ENCODE measurements at regions of chr9 and their contacts with region 1.

Region 1: GRCh38 chr9:100322954-100323536 is 29.7 kb downstream of the TEX10 start:
- DNase-seq: peak; percentile 61
- ATAC-seq: no peak
- H3K4me3 ChIP-seq: no peak overlapping the region
- H3K4me3 Mint-ChIP-seq: no peak overlapping the region
- H3K27ac ChIP-seq: no peak overlapping the region
- H3K27ac Mint-ChIP-seq: no peak overlapping the region
- H3K4me1 ChIP-seq: no peaks in the 10 kb centered on the region
- H3K4me1 Mint-ChIP-seq: peaks cover 4% of the 10 kb centered on the region
- H3K27me3 ChIP-seq: no peaks in the 10 kb centered on the region
- H3K27me3 Mint-ChIP-seq: no peaks in the 10 kb centered on the region
- CTCF ChIP-seq: peak; percentile 78

Region 2: GRCh38 chr9:98974994-98975712 is 1347.9 kb before region 1 on chr9:
- CTCF ChIA-PET with region 1: interaction called, 4 read pairs
- POLR2A ChIA-PET with region 1: no interaction called
- intact Hi-C with region 1: loop called (anchors 5 kb)
- DNase-seq: peak; percentile 82
- ATAC-seq: peak; percentile 99
- H3K4me3 ChIP-seq: peak overlapping the region in 4 of 5 experiments; percentile 3 to 47 (median 24)
- H3K4me3 Mint-ChIP-seq: peak overlapping the region; percentile 52
- H3K27ac ChIP-seq: no peak overlapping the region
- H3K27ac Mint-ChIP-seq: no peak overlapping the region
- H3K4me1 ChIP-seq: peaks cover 4 to 10% of the 10 kb centered on the region in 2 donors
- H3K4me1 Mint-ChIP-seq: peaks cover 6% of the 10 kb centered on the region
- H3K27me3 ChIP-seq: peaks cover 0 to 21% (median 10%) of the 10 kb centered on the region in 4 experiments
- H3K27me3 Mint-ChIP-seq: peaks cover 20% of the 10 kb centered on the region
- CTCF ChIP-seq: peak; percentile 97

Region 3: DNA sequence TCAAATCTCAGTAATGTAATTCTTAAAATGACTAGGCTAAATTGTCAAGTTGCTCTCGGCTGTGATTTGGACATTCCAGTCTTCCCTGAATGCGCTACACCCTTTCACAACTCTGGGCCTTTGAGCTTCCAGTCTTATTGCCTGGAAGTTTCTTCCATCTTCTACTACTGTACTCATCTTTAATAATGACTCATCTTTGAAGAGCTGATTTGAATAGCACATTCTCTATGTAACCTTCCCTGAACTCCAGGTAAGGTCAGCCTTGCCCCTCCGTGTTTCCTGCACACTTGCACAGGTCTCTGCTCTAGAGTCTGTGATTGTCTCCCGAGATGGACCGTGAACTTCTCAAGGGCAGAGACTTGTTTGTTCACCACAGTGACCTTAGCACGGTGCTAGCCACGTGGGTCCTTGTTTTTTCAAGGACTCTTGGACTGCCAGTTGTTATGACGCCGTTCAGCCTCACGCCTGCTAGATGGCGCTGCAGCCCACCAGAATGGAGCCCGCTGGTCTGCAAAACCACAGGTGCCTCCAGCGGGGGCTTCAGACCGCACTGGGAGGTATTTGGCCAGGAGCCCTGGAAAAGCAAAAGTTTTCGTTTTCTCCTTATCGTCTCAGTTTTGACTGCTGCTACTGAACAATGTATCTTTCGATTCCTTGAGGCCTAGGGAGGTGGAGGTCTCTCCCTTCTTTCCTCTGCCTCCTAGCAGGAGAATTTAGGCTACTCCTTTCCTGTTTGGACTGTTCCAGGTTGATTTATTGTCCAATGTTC is 1056.6 kb before region 1 on chr9:
- CTCF ChIA-PET with region 1: interaction called, 4 read pairs
- POLR2A ChIA-PET with region 1: no interaction called
- intact Hi-C with region 1: loop called (anchors 5 kb)
- DNase-seq: peak; percentile 81
- ATAC-seq: peak; percentile 74
- H3K4me3 ChIP-seq: peak overlapping the region in 1 of 5 experiments; percentile 3
- H3K4me3 Mint-ChIP-seq: peak overlapping the region; percentile 71
- H3K27ac ChIP-seq: no peak overlapping the region
- H3K27ac Mint-ChIP-seq: peak overlapping the region; percentile 59
- H3K4me1 ChIP-seq: peaks cover 6 to 9% of the 10 kb centered on the region in 2 donors
- H3K4me1 Mint-ChIP-seq: peaks cover 31% of the 10 kb centered on the region
- H3K27me3 ChIP-seq: no peaks in the 10 kb centered on the region
- H3K27me3 Mint-ChIP-seq: peaks cover 3% of the 10 kb centered on the region
- CTCF ChIP-seq: peak; percentile 95

Region 4: DNA sequence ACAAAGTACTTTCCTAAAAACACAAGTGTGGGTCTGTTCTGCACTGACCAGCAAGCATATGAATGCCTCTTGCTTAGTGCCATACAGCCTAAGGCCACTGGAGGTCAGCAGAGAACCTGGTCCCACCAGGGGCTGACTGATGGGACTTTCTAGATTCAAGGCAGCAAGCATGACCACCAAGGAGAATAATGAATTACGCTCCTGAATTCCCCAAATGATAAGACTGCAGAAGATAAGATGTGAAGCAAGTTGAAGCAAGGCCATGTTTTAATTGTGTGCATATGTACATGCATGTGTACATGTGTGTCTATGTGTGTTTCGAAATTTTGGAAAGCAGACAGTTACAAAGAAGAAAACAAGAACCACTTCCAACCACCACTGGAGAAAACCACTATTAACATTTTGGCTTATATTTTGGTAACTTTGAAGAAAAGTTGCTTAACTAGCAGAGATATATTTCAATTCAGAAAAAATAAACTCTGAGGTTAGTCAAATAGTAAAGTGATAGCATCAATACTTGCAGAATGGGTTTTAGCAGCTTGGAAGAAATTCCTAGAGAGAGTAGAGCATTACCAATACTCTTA is 294.8 kb before region 1 on chr9:
- CTCF ChIA-PET with region 1: interaction called, 44 read pairs
- POLR2A ChIA-PET with region 1: no interaction called
- intact Hi-C with region 1: loop called (anchors 1 kb)
- DNase-seq: peak; percentile 83
- ATAC-seq: peak; percentile 99
- H3K4me3 ChIP-seq: no peak overlapping the region
- H3K4me3 Mint-ChIP-seq: no peak overlapping the region
- H3K27ac ChIP-seq: no peak overlapping the region
- H3K27ac Mint-ChIP-seq: peak overlapping the region; percentile 3
- H3K4me1 ChIP-seq: peaks cover 16% of the 10 kb centered on the region in 2 donors
- H3K4me1 Mint-ChIP-seq: peaks cover 26% of the 10 kb centered on the region
- H3K27me3 ChIP-seq: no peaks in the 10 kb centered on the region
- H3K27me3 Mint-ChIP-seq: no peaks in the 10 kb centered on the region
- CTCF ChIP-seq: peak; percentile 99

Region 5: GRCh38 chr9:100352727-100353505 is 29.9 kb after region 1 on chr9 and contains the start of gene TEX10:
- CTCF ChIA-PET with region 1: interaction called, 13 read pairs
- POLR2A ChIA-PET with region 1: interaction called, 3 read pairs
- intact Hi-C with region 1: no loop called
- DNase-seq: peak; percentile 93
- ATAC-seq: peak; percentile 93
- H3K4me3 ChIP-seq: peak within 1 kb of the TSS; percentile 53 to 94 (median 92)
- H3K4me3 Mint-ChIP-seq: peak within 1 kb of the TSS; percentile 93
- H3K27ac ChIP-seq: peak within 1 kb of the TSS; percentile 58 to 90
- H3K27ac Mint-ChIP-seq: peak within 1 kb of the TSS; percentile 83
- H3K4me1 ChIP-seq: peaks cover 35% of the 10 kb centered on the region in 2 donors
- H3K4me1 Mint-ChIP-seq: peaks cover 69% of the 10 kb centered on the region
- H3K27me3 ChIP-seq: no peaks in the 10 kb centered on the region
- H3K27me3 Mint-ChIP-seq: no peaks in the 10 kb centered on the region
- CTCF ChIP-seq: no peak
- total RNA-seq, gene TEX10: 24.9 and 27.6 TPM in 2 replicates

Region 6: DNA sequence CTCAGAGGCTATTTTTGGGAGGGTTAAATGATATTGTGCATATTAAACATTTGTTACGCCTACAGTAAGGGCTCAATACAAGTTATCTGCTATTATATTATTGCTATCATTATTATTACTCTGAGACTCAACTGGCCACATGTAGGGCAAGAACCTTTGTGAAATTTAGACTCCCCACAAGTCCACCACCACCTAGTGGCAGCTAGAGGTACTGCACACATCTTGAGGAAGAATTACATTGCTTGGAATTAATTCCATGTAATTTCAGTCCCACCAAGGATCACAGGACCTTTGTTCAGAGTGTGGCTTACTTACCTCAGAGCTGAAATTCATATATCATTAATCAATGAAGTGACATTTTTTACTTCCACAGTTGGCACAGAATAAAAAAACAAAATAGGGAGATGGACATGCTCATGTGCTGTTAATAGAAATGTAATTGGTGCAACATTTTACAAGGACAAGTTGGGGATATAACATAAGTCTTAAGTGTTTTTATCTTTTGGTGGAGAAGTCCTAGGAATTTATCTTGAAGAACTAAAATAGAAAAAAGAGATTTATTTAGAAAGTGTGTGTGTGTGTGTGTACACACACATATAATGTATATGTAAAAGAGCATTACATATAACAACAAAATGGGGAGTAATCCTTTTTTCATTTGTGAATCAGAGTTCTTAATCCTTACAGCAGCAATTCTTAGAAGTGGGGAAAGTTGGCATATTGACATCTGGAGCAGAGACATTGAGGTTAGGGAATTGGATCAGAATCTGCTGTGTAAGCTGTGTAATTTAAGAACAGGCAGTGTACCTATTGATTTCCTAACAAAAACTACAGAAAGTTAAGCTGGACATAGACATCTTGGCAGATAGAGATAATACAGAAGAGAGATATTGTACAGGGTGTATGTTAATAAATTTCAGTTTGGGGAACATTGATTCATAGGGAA is 115.1 kb after region 1 on chr9:
- CTCF ChIA-PET with region 1: interaction called, 4 read pairs
- POLR2A ChIA-PET with region 1: no interaction called
- intact Hi-C with region 1: loop called (anchors 10 kb)
- DNase-seq: peak; percentile 72
- ATAC-seq: peak; percentile 81
- H3K4me3 ChIP-seq: no peak overlapping the region
- H3K4me3 Mint-ChIP-seq: no peak overlapping the region
- H3K27ac ChIP-seq: no peak overlapping the region
- H3K27ac Mint-ChIP-seq: no peak overlapping the region
- H3K4me1 ChIP-seq: no peaks in the 10 kb centered on the region
- H3K4me1 Mint-ChIP-seq: no peaks in the 10 kb centered on the region
- H3K27me3 ChIP-seq: no peaks in the 10 kb centered on the region
- H3K27me3 Mint-ChIP-seq: no peaks in the 10 kb centered on the region
- CTCF ChIP-seq: peak; percentile 99

Region 7: DNA sequence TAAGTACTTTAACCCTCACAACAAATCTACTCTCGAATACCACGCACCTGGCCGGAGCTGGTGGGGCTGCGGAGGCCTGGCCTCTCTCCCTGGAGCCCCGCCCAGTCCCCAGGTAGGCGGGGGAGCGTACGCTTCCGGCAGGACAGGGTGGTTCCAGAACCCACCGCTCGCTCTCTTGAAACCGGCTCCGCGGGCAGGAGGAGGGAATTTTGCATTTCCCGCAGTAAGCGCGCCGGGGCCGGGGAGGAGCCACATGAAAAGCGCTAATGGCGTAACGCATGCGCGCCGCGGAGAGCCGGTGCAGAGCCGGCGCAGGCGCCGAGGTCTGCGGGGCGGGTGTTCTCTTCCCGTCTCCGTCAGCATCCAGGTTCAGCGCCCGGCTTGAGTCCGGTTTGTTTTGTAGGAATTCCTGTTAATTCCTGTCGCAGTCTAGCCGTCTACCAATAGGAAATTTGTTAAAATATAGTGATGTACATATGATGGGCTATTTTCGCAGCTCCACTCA is 275.6 kb after region 1 on chr9:
- CTCF ChIA-PET with region 1: interaction called, 3 read pairs
- POLR2A ChIA-PET with region 1: no interaction called
- intact Hi-C with region 1: loop called (anchors 2 kb)
- DNase-seq: peak; percentile 85
- ATAC-seq: peak; percentile 87
- H3K4me3 ChIP-seq: peak overlapping the region; percentile 49 to 79 (median 61)
- H3K4me3 Mint-ChIP-seq: peak overlapping the region; percentile 76
- H3K27ac ChIP-seq: peak overlapping the region in 1 of 2 donors; percentile 17
- H3K27ac Mint-ChIP-seq: peak overlapping the region; percentile 4
- H3K4me1 ChIP-seq: peaks cover 11 to 13% of the 10 kb centered on the region in 2 donors
- H3K4me1 Mint-ChIP-seq: peaks cover 23% of the 10 kb centered on the region
- H3K27me3 ChIP-seq: no peaks in the 10 kb centered on the region
- H3K27me3 Mint-ChIP-seq: no peaks in the 10 kb centered on the region
- CTCF ChIP-seq: no peak

Measured in B cell (primary cell).